ENCODE measurements at regions of chr11 and their contacts with region 1.

Region 1: DNA sequence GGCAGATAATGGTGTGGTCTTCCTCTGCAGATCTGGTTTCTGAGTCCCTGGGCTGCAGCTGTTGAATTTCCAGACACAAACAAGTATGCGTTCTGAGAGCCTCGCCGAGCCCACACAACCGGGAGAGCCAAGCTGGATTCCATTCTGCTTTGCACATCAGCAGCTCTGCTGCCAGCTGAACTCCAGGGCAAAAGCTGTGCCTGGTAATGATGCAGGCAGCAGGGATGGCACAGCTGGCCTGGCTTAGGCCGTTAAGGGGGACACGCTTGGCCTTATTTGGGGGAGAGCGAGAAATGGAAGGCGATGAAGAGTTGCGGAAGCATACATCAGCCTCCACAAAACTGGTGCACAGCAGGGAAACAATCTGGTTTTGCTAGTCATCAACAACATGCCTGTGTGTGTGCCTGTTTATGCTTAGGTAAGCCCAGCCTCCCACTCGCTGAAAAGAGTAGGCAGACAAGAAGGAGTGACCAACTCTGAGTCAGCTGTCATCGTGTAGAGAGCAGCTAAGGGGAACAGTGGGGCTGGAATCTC is 25.1 kb downstream of the ADAMTS8 start:
- DNase-seq: peak; percentile 25
- ATAC-seq: peak; percentile 69
- H3K4me3 ChIP-seq: no peak overlapping the region
- H3K27ac ChIP-seq: no peak overlapping the region
- H3K4me1 ChIP-seq: peaks cover 8% of the 10 kb centered on the region; the same call in 1 of the 2 replicates
- H3K27me3 ChIP-seq: 0 out of 2 replicates have a peak, but pooled peaks cover 5% of the 10 kb centered on the region
- CTCF ChIP-seq: no peak

Region 2: DNA sequence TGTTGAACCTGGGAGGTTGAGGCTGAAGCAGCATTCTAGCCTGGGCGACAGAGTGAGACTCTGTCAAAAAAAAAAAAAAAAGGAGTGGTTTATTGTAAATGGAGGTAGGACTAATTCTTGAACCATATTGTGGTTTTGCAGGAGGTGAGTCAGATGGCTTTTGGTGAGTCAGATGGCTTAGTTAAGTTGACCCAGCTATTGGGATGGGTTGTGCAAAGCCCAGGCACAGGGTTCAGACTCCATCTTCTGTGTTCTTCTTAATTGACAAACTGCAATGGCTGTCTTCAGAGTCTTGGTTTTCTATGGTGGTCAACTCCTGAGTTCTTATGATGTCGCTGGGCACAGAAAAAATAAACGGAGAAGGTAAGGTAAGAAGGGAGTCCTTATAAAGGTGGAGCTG is 227.8 kb after region 1 on chr11:
- CTCF ChIA-PET with region 1: no interaction called
- POLR2A ChIA-PET with region 1: interaction called, 16 read pairs
- in situ Hi-C with region 1: no loop called
- intact Hi-C with region 1: no loop called
- DNase-seq: peak; percentile 74
- ATAC-seq: peak; percentile 62; the same call in 1 of the 2 replicates
- H3K4me3 ChIP-seq: no peak overlapping the region
- H3K27ac ChIP-seq: peak overlapping the region; percentile 69; the same call in 1 of the 2 replicates
- H3K4me1 ChIP-seq: peaks cover 36% of the 10 kb centered on the region
- H3K27me3 ChIP-seq: no peaks in the 10 kb centered on the region
- CTCF ChIP-seq: no peak

Region 3: DNA sequence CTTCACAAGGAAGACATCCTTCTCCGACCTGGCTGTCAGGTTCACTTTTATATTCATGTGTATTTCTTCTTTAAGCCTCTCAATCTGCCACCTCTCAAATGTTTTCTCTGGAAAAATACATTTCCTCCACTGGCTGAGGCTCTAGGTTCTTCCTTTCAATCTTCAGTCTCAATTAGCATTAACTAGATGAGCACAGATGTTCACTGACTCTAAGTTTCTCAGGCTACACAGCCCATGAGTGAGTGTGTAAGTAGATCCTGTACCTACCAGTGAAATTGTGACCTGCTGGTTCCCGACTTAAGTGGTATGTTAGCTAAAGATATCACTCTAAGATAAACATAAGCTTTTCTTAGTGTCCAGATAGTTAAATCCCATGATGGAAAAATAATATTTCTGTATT is 252.0 kb after region 1 on chr11:
- CTCF ChIA-PET with region 1: no interaction called
- POLR2A ChIA-PET with region 1: interaction called, 11 read pairs
- in situ Hi-C with region 1: no loop called
- intact Hi-C with region 1: no loop called
- DNase-seq: no peak
- ATAC-seq: no peak
- H3K4me3 ChIP-seq: no peak overlapping the region
- H3K27ac ChIP-seq: peak overlapping the region; percentile 86; the same call in 1 of the 2 replicates
- H3K4me1 ChIP-seq: peaks cover 22% of the 10 kb centered on the region
- H3K27me3 ChIP-seq: no peaks in the 10 kb centered on the region
- CTCF ChIP-seq: no peak

Measured in Panc1 (cell line).